ENCODE measurements at regions of chr1 and their contacts with region 1.

Region 1: GRCh38 chr1:77888081-77888780 is at the start of gene NEXN:
- DNase-seq: peak; percentile 49 to 91
- H3K4me3 ChIP-seq: peak within 1 kb of the TSS; percentile 70 to 95
- H3K27ac ChIP-seq: peak within 1 kb of the TSS; percentile 86 to 98
- H3K4me1 ChIP-seq: peaks cover 2 to 8% of the 10 kb centered on the region in 2 donors
- H3K27me3 ChIP-seq: no peaks in the 10 kb centered on the region
- CTCF ChIP-seq: no peak
- total RNA-seq, gene NEXN: 38.2 TPM

Region 2: GRCh38 chr1:77759071-77760028 is 128.9 kb before region 1 on chr1 and contains the start of gene USP33:
- intact Hi-C with region 1: loop called (anchors 5 kb)
- DNase-seq: peak; percentile 53 to 90
- H3K4me3 ChIP-seq: peak within 1 kb of the TSS; percentile 90 to 96
- H3K27ac ChIP-seq: peak within 1 kb of the TSS; percentile 88 to 89
- H3K4me1 ChIP-seq: peaks cover 0 to 4% of the 10 kb centered on the region in 2 donors
- H3K27me3 ChIP-seq: no peaks in the 10 kb centered on the region
- CTCF ChIP-seq: no peak
- total RNA-seq, gene USP33: 28.6 TPM

Region 3: GRCh38 chr1:77779529-77780281 is 108.5 kb before region 1 on chr1 and contains the start of gene MIGA1:
- intact Hi-C with region 1: loop called (anchors 2 kb)
- DNase-seq: peak; percentile 57 to 93
- H3K4me3 ChIP-seq: peak within 1 kb of the TSS; percentile 84 to 92
- H3K27ac ChIP-seq: peak within 1 kb of the TSS; percentile 72 to 78
- H3K4me1 ChIP-seq: peaks cover 0 to 3% of the 10 kb centered on the region in 2 donors
- H3K27me3 ChIP-seq: no peaks in the 10 kb centered on the region
- CTCF ChIP-seq: no peak
- total RNA-seq, gene MIGA1: 13.1 TPM

Region 4: DNA sequence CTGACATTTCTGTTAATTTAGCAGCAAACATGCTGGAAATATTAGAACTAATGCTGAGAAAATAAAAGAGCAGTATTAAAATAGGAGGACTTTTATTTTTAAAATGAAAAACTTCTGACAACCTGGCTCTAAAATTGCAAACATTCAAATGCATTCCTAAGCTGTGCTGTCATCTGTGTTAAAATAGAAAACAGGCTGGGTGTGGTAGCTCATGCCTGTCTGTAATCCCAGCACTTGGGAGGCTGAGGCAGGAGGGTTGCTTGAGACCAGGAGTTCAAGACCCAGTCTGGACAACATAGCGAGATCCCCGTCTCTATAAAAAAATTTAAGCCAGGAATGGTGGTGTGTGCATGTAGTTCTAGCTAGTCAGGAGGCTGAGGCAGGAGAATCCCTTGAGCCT is 64.1 kb before region 1 on chr1:
- intact Hi-C with region 1: loop called (anchors 1 kb)
- DNase-seq: no peak
- H3K4me3 ChIP-seq: no peak overlapping the region
- H3K27ac ChIP-seq: peak overlapping the region; percentile 5 to 55
- H3K4me1 ChIP-seq: peaks cover 6 to 17% of the 10 kb centered on the region in 2 donors
- H3K27me3 ChIP-seq: no peaks in the 10 kb centered on the region
- CTCF ChIP-seq: no peak

Region 5: DNA sequence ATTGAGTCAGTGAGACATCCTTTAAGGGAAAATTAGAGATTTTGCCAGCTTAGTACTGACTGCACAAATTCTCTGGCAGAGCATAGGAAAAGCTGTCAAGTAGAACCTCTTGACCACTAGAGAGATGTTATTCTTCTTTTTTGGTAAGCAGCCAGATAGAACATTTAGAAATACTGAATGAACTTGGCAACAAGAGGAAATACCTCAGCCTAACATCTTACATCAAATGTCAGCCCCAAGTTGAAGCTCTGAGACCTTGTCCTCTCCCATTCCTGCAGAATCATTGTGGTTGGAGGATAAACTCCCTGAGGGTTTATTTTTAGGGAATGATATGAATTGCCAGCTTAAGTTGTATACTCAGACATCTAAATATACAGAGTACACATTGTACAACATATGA is 55.3 kb before region 1 on chr1:
- intact Hi-C with region 1: loop called (anchors 2 kb)
- DNase-seq: no peak
- H3K4me3 ChIP-seq: peak overlapping the region in 1 of 2 donors; percentile 35
- H3K27ac ChIP-seq: peak overlapping the region; percentile 83 to 93
- H3K4me1 ChIP-seq: peaks cover 3 to 55% of the 10 kb centered on the region in 2 donors
- H3K27me3 ChIP-seq: no peaks in the 10 kb centered on the region
- CTCF ChIP-seq: no peak

Region 6: DNA sequence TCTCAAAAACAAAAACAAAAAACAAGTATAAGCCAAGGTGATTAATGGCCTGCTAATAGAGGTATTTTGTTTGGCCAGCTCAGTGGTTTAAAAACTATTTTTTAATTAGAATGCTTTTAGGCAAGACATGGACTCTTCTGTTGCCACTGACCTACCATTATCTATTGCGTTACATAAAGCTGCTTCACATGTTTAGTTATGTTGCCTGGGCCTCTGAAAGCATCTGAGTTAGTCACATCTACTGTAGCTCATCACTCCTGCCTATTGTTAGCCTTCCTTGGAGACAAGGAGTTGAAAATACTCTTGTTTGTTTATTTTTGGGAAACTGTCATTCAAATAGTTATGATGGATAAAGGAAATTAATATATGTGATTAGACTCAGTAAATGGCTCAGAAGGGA is 130.8 kb after region 1 on chr1:
- intact Hi-C with region 1: no loop called
- DNase-seq: no peak
- H3K4me3 ChIP-seq: no peak overlapping the region
- H3K27ac ChIP-seq: no peak overlapping the region
- H3K4me1 ChIP-seq: peaks cover 0 to 10% of the 10 kb centered on the region in 2 donors
- H3K27me3 ChIP-seq: no peaks in the 10 kb centered on the region
- CTCF ChIP-seq: no peak